ENCODE measurements at regions of chr17 and their contacts with region 1.

Region 1: DNA sequence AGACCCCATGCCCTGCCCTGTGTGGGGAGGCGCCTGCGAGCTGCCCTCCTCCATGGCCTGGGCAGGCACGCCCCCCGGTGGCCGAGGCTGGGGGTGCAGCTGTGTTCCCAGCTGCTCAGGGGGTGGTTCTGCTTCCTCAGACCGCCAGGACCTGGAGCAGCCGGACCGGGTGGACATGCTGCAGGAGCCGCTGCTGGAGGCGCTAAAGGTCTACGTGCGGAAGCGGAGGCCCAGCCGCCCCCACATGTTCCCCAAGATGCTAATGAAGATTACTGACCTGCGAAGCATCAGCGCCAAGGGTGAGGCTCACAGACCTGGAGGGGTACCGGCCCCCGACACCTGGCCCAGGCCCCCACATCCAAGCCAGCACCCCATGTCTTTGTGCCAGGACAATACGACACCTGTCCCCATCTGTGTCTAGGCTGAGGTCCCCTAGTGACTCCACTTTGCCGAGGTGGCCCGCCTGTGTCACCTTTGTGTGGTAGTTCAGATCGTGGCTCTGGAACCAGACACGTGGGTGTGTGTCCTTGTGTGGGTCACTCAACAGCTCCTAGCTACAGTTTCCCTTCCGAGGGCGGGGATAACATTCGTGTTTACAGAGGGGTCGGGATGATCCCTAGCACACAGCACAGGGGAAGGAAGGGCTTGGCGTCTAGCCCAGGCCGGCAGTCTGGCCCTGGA is 9.3 kb downstream of the GJD3 start:
- DNase-seq: peak in 1 of 2 donors; percentile 89
- H3K4me3 ChIP-seq: no peak overlapping the region
- H3K27ac ChIP-seq: peak overlapping the region; percentile 52
- H3K4me1 ChIP-seq: peaks cover 36% of the 10 kb centered on the region
- H3K27me3 ChIP-seq: no peaks in the 10 kb centered on the region
- CTCF ChIP-seq: peak; percentile 96 to 98 (median 98)
- POLR2A ChIP-seq: no peak

Region 2: DNA sequence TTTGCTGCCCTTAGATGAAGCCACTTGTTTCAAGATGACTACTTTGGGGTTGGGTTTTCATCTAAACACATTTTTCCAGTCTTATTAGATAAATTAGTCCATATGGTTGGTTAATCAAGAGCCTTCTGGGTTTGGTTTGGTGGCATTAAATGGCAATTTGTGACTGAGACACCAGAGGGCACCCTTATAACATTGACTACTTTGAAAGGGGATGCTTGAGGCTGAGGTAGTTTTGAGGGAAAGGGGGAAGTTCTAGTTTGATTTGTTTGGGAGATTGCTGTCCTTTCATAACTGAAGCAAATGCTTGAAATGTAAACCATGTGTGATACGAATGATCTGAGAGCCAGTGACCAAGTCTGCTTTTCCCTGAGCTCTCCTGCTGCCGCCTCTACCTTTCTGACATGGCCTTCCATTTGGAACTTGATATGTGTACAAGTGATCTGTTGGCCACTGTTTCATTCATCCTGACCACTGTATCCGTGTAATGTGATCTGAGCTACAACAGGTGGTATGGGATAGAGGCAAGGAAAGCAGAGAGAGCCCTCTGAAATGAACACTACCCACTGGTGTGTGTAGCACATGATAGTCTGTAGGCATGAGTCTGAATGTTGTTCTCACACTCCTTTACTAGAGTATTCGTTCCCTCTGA is 52.1 kb before region 1 on chr17:
- intact Hi-C with region 1: loop called (anchors 2 kb)
- DNase-seq: no peak
- H3K4me3 ChIP-seq: no peak overlapping the region
- H3K27ac ChIP-seq: peak overlapping the region; percentile 52
- H3K4me1 ChIP-seq: peaks cover 58% of the 10 kb centered on the region
- H3K27me3 ChIP-seq: no peaks in the 10 kb centered on the region
- CTCF ChIP-seq: peak; percentile 65 to 88 (median 88)
- POLR2A ChIP-seq: no peak

Region 3: DNA sequence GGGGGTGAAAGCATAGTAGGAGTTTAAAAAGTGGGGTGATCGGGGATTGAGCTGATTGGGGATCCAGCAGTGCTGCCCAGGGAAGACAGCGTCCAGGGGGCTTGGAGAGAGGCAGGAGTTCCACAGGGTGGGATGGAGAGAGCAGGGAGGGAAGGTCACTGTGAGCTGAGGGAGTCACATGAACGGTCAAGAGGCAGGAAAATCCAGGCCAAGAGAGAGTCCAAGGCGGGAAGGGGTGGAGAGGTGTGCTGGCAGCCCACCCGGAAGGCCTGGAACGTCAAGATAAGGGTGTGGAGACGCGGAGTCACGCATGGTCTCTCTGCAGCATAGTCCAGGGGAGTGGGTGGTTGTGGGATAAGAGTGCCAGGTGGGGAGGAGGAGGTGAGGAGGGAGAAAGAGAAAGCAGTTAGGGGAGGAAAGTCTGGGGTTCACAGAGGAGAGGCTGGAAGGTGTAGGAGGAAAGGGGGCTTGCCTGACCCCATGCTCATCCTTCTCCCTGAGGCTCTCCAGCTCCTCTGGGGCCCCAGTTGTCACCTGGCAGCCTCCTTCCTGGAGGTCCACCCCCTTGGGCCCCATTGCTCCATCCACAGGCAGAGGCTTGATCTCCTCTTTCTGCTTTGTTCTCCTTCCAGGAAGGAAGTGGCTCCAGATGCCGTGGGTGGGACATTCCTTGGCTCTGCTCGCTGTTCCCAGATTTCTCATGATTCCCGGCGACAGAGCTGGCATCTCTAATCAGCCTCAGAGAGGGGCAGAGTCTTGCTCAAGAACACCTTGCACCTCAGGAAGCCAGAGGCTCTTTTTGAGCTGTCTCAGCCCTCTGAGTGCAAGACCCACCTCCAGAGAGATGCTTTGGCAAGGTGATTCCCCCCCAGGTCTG is 181.3 kb after region 1 on chr17:
- intact Hi-C with region 1: loop called (anchors 2 kb)
- DNase-seq: no peak
- H3K4me3 ChIP-seq: no peak overlapping the region
- H3K27ac ChIP-seq: peak overlapping the region; percentile 91
- H3K4me1 ChIP-seq: peaks cover 77% of the 10 kb centered on the region
- H3K27me3 ChIP-seq: no peaks in the 10 kb centered on the region
- CTCF ChIP-seq: no peak
- POLR2A ChIP-seq: no peak